Dendritic cell treated with granulocyte-macrophage colony-stimulating factor and Interleukin-4, amounts not matched to agents 40 ng/mL and 50 ng/mL, for 4 days (primary cell): ENCODE measurements at regions of chr16 and their contacts with region 1.

Region 1: DNA sequence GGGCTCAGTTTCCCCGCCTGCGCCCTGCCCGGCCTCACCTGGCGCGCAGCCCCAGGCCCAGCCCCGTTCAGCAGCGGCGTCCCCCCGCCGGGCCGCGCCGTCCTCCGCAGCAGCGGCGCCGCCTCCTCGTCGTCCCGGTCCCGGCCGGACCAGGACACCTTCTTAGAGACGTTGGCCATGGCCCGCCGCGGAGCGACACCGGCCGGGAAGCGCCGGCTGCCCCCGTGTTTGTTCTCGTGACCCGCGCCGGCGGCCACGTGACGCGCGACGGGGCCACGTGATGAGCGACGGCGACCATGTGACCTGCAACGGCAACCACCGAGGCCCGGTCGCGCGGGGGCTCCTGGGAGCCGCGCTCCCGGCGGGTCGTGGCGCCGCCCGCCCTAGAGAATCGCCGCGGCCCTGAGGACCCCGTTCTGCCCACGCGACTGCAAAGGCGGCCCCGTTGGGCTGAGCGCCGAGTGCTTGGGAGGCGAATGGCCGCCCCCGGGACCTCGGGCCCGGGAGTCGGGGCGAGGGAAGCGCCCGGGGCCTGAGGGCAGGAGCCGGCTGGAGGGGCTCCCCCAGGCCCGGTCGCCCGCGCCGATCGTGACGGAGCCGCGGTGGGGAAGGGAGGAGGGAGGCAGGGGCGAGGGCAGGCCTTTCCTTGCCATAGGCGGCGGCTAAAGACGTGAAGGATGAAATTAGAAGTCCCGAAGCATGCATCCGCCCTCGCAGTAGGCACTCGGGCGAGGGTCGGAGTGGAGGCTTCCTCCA is at the start of gene CLCN7:
- H3K4me3 Mint-ChIP-seq: peak within 1 kb of the TSS; percentile 79
- H3K27ac Mint-ChIP-seq: peak within 1 kb of the TSS; percentile 93
- H3K4me1 Mint-ChIP-seq: peaks cover 40% of the 10 kb centered on the region
- H3K27me3 Mint-ChIP-seq: no peaks in the 10 kb centered on the region

Region 2: DNA sequence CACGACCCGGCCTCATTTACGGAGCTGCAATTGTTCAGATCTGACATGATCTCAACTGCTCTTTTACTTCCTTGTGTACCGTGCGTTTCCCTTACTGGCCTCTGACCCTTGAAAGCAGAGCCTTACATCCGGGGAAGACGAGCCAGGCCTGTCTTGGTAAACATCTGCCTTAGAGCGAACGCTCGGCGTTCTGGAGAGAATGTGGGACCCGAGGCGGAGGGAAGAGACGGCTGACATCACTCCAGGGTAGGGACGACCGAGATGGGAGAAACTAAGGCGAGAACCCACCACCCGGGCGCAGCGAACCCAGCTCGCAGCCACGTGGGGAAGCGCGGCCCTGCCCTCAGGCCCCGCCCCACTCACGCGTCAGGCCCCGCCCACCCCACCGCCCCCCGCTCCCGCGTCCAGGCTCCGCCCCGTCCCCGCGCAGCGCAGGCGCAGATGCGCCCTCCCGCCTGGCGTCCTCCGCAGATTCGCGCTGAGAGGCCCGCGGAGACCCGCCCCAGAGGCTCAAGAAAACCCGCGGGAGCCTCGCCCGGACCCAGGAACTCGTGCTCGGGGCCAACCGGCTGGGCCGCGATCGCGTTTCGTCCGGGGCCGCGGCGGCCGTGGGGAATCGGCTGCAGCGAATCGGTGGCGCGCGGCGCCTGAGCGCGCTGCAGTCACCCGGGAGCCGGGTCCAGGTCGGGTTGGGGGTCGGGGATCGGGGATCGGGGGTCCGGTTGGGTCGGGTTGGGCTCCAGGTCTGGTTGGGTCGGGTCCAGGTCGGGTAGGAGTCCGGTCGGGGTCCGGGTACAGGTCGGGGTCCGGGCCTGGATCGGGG is 18.2 kb after region 1 on chr16 and contains the start of gene TELO2:
- intact Hi-C with region 1: loop called (anchors 2 kb)
- H3K4me3 Mint-ChIP-seq: peak within 1 kb of the TSS; percentile 91
- H3K27ac Mint-ChIP-seq: peak within 1 kb of the TSS; percentile 98
- H3K4me1 Mint-ChIP-seq: peaks cover 36% of the 10 kb centered on the region
- H3K27me3 Mint-ChIP-seq: no peaks in the 10 kb centered on the region

Region 3: GRCh38 chr16:1509307-1510221 is 34.6 kb after region 1 on chr16:
- intact Hi-C with region 1: no loop called
- H3K4me3 Mint-ChIP-seq: no peak overlapping the region
- H3K27ac Mint-ChIP-seq: no peak overlapping the region
- H3K4me1 Mint-ChIP-seq: no peaks in the 10 kb centered on the region
- H3K27me3 Mint-ChIP-seq: no peaks in the 10 kb centered on the region

Region 4: GRCh38 chr16:1527836-1528811 is 53.1 kb after region 1 on chr16:
- intact Hi-C with region 1: no loop called
- H3K4me3 Mint-ChIP-seq: no peak overlapping the region
- H3K27ac Mint-ChIP-seq: no peak overlapping the region
- H3K4me1 Mint-ChIP-seq: peaks cover 8% of the 10 kb centered on the region
- H3K27me3 Mint-ChIP-seq: peaks cover 23% of the 10 kb centered on the region